ENCODE measurements at regions of chr15 and their contacts with region 1.

Region 1: DNA sequence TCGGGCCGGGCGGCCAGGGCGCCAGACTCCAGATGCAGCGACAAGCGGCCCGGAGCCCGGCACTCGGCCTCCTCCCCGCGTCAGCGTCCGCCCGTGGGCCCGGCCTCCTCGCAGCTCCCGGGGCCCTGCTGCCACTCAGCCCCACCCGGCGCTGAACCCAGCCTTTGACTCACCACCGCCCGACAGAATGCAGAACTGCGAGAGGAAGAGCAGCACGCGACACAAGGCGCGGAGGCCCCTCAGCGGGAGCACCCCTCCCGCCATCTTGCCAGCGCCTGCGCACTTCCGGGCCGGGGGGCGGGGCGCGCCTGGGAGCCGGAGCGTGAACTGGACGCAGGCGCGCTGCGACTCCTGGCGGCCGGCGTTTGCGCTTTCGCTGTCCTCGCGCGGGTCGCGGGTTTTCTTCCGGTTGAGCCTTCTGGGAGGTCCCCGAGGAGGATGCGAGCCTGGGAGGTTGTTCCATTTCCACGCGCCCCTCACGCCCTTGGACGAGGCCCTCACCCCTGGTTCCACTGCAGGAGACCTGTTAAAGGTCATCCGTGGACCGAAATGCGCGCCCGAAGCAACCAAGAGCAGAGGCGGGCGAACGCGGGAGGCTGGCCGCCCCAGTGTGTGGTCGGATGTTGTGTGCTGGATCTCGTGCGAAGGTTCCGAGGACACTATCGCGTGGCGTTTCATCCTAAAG is at the start of gene TM2D3:
- DNase-seq: peak; percentile 96 to 98 (median 98)
- H3K4me3 ChIP-seq: peak within 1 kb of the TSS; percentile 70 to 80 (median 76)
- H3K4me3 Mint-ChIP-seq: peak within 1 kb of the TSS; percentile 80 to 94
- H3K27ac ChIP-seq: peak within 1 kb of the TSS; percentile 99 to 100
- H3K27ac Mint-ChIP-seq: peak within 1 kb of the TSS; percentile 98 to 100 (median 99)
- H3K4me1 ChIP-seq: peaks cover 43 to 50% of the 10 kb centered on the region in 2 donors
- H3K4me1 Mint-ChIP-seq: peaks cover 42% of the 10 kb centered on the region
- H3K27me3 ChIP-seq: no peaks in the 10 kb centered on the region
- H3K27me3 Mint-ChIP-seq: no peaks in the 10 kb centered on the region
- CTCF ChIP-seq: peak; percentile 88
- polyA plus RNA-seq, gene TM2D3: 22.9 to 54.6 (median 26.5) TPM

Region 2: DNA sequence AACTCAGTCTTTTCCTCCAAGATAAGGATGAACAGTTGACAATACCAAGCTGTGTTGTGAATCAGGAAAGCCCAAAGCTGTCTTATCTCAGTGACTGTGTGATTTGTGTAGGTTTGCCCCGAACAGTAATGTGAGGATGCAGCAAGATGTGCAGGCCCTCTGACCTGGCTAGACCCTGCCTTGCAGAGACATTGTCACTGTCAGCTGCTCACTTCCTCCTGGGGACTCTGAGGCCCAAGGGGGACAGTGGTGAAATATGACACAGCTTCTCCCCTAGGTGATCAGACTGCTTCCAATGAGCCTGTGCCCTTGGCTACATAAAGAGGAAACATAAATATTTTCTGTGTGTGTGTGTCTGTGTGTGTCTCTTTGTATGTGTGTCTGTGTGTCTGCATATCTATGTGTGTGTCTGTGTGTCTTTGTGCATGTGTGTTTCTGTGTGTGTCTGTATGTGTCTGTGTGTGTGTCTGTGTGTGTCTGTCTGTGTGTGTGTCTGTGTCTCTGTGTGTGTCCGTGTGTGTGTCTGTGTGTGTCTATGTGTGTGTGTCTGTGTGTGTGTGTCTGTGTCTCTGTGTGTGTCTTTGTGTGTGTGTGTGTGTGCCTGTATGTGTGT is 711.4 kb before region 1 on chr15:
- intact Hi-C with region 1: loop called in 1 of 2 experiments (anchors 10 kb)
- DNase-seq: peak; percentile 90 to 94 (median 92)
- H3K4me3 ChIP-seq: no peak overlapping the region
- H3K4me3 Mint-ChIP-seq: no peak overlapping the region
- H3K27ac ChIP-seq: peak overlapping the region; percentile 67 to 96
- H3K27ac Mint-ChIP-seq: no peak overlapping the region
- H3K4me1 ChIP-seq: peaks cover 47 to 49% of the 10 kb centered on the region in 2 donors
- H3K4me1 Mint-ChIP-seq: peaks cover 23% of the 10 kb centered on the region
- H3K27me3 ChIP-seq: no peaks in the 10 kb centered on the region
- H3K27me3 Mint-ChIP-seq: peaks cover 0 to 1% (median 0%) of the 10 kb centered on the region in 3 donors
- CTCF ChIP-seq: no peak

Region 3: GRCh38 chr15:101294731-101295606 is 357.3 kb before region 1 on chr15 and contains the start of gene SNRPA1:
- intact Hi-C with region 1: loop called in 1 of 2 experiments (anchors 2 kb)
- DNase-seq: peak; percentile 92 to 94 (median 94)
- H3K4me3 ChIP-seq: peak within 1 kb of the TSS; percentile 88 to 97 (median 93)
- H3K4me3 Mint-ChIP-seq: peak within 1 kb of the TSS; percentile 94 to 98
- H3K27ac ChIP-seq: peak within 1 kb of the TSS; percentile 94 to 97
- H3K27ac Mint-ChIP-seq: peak within 1 kb of the TSS; percentile 88 to 98 (median 97)
- H3K4me1 ChIP-seq: peaks cover 22 to 26% of the 10 kb centered on the region in 2 donors
- H3K4me1 Mint-ChIP-seq: peaks cover 26% of the 10 kb centered on the region
- H3K27me3 ChIP-seq: no peaks in the 10 kb centered on the region
- H3K27me3 Mint-ChIP-seq: no peaks in the 10 kb centered on the region
- CTCF ChIP-seq: no peak
- polyA plus RNA-seq, gene SNRPA1: 23.8 to 65.5 (median 35.4) TPM

Region 4: DNA sequence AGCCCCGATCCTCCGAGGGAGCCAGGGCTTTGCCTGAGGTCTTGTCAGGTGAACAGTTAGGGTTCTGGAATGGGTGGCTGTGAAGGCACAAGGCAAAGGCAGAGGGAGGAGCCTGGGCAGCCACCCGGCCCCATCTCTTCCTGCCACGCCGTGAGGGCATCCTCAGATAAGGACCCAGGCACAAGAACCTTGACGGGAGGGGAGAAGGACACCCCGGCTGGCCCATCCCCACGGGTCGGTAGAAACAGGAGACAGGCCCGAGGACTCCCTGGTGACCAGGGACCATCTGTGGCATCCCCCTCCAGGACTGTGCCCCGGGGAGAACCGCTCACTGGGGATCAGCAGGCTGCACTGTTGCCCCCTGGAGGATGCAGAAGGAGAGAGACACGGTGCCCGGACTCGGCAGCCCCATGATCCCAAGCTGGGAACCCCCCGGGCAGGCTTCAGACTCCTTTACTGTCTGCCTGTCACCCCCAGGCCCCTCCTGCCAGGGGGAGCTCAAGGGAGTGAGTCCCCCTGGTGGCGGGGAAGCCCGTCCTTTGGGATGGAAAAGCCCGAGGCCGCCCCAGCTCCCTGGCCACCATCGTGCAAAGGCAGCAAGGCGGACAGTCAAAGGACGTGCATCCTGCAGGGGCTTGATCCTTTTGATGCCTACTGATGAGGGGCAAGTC is 150.4 kb before region 1 on chr15:
- intact Hi-C with region 1: loop called in 1 of 2 experiments (anchors 10 kb)
- DNase-seq: peak in 2 of 3 donors; percentile 24 to 63
- H3K4me3 ChIP-seq: no peak overlapping the region
- H3K4me3 Mint-ChIP-seq: peak overlapping the region; percentile 39 to 63
- H3K27ac ChIP-seq: no peak overlapping the region
- H3K27ac Mint-ChIP-seq: peak overlapping the region in 2 of 7 donors; percentile 27 to 36
- H3K4me1 ChIP-seq: peaks cover 17 to 19% of the 10 kb centered on the region in 2 donors
- H3K4me1 Mint-ChIP-seq: peaks cover 18% of the 10 kb centered on the region
- H3K27me3 ChIP-seq: peaks cover 0 to 28% of the 10 kb centered on the region in 2 donors
- H3K27me3 Mint-ChIP-seq: peaks cover 40 to 55% (median 52%) of the 10 kb centered on the region in 3 donors
- CTCF ChIP-seq: peak; percentile 73

Measured in CD14-positive monocyte (primary cell).